Posterior vena cava (tissue), 2 donors: ENCODE measurements at regions of chr9 and their contacts with region 1.

Region 1: DNA sequence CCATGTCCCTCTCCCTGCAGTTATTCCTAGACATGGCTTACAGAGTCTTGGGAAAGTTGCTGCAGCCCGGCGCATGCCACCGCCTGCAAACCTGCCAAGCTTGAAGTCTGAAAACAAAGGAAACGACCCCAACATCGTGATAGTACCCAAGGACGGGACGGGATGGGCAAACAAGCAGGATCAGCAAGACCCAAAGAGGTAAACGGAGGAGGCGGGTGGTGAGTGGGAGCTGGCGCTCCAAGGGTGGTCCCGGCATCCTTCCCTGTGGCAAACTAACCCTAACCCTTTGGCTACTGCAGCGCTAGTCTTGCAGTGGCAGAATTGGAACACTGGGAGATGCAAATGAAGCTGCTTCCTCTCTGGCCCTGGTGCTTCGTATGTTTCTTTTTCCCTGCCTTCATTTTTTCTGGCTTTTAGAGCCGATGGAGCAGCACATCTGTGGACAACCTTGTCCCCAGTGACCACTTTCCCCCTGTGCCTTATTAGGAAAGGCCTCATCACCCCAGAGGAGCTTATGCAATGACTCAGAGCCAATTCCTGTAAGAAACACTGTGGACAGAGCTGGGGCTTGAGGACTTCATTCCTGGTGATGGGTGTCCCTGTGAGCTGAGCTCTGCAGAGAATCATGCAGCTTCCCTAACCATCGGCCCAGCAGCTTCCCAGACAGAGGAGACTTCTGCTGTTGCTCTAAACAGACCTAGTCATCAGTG is 38.9 kb downstream of the PRRC2B start:
- DNase-seq: peak; percentile 63

Region 2: DNA sequence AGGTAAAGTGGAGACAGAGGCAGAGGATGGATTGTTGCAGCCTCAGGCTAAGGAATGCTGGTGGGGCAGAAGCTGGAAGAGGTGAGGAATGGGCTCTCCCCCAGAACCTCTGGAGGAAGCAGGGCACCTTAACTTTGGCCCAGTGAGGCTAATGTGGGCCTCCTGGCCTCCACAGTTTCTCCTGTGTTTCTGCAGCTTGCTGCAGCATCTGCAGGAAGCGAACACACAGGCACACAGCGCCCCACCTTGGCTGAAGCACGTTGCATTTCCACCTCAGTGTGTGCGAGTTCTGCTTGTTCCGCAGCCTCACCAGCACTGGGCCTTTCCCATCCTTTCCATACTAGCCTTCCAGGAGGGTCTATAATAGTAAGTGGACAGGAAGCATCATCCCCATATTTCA is 1015.1 kb before region 1 on chr9:
- intact Hi-C with region 1: loop called in 1 of 2 experiments (anchors 10 kb)
- DNase-seq: peak; percentile 71